Calu3 (cell line): ENCODE measurements at regions of chr20 and their contacts with region 1.

Region 1: GRCh38 chr20:35994994-35995453 is 26.6 kb downstream of the CNBD2 start:
- DNase-seq: peak; percentile 97
- H3K4me3 Mint-ChIP-seq: no peak overlapping the region
- H3K27ac Mint-ChIP-seq: no peak overlapping the region
- H3K4me1 Mint-ChIP-seq: peaks cover 11% of the 10 kb centered on the region
- H3K27me3 Mint-ChIP-seq: peaks cover 2% of the 10 kb centered on the region
- CTCF ChIP-seq: peak; percentile 97

Region 2: DNA sequence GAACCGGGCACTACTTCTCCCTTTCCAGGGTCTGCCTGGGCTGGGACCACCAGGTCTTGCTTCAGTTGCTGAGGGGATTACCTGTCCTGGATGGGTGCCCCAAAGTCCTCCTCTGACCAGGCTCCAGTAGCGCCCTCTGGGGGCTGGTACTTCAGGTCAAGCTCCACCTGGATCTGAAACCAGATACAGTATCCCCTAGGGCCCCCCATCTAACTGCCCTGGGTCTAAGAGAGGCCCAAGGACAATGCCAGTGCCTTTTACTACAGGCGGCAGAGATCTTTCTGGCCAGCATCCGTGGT is 390.6 kb before region 1 on chr20:
- CTCF ChIA-PET with region 1: no interaction called
- intact Hi-C with region 1: no loop called
- DNase-seq: peak; percentile 63
- H3K4me3 Mint-ChIP-seq: no peak overlapping the region
- H3K27ac Mint-ChIP-seq: no peak overlapping the region
- H3K4me1 Mint-ChIP-seq: peaks cover 44% of the 10 kb centered on the region
- H3K27me3 Mint-ChIP-seq: no peaks in the 10 kb centered on the region
- CTCF ChIP-seq: peak; percentile 57

Region 3: GRCh38 chr20:35718972-35719635 is 275.9 kb before region 1 on chr20:
- CTCF ChIA-PET with region 1: no interaction called
- intact Hi-C with region 1: no loop called
- DNase-seq: no peak
- H3K4me3 Mint-ChIP-seq: no peak overlapping the region
- H3K27ac Mint-ChIP-seq: no peak overlapping the region
- H3K4me1 Mint-ChIP-seq: no peaks in the 10 kb centered on the region
- H3K27me3 Mint-ChIP-seq: no peaks in the 10 kb centered on the region
- CTCF ChIP-seq: no peak

Region 4: GRCh38 chr20:35954200-35954906 is 40.7 kb before region 1 on chr20 and contains the start of gene SCAND1:
- CTCF ChIA-PET with region 1: interaction called, 27 read pairs
- intact Hi-C with region 1: no loop called
- DNase-seq: peak; percentile 99
- H3K4me3 Mint-ChIP-seq: peak within 1 kb of the TSS; percentile 99
- H3K27ac Mint-ChIP-seq: peak within 1 kb of the TSS; percentile 88
- H3K4me1 Mint-ChIP-seq: peaks cover 13% of the 10 kb centered on the region
- H3K27me3 Mint-ChIP-seq: no peaks in the 10 kb centered on the region
- CTCF ChIP-seq: peak; percentile 96
- total RNA-seq, gene SCAND1: 83.5 and 88.6 TPM in 2 replicates

Region 5: GRCh38 chr20:36064658-36065426 is 69.8 kb after region 1 on chr20:
- CTCF ChIA-PET with region 1: interaction called, 11 read pairs
- intact Hi-C with region 1: no loop called
- DNase-seq: peak; percentile 100
- H3K4me3 Mint-ChIP-seq: peak overlapping the region; percentile 95
- H3K27ac Mint-ChIP-seq: peak overlapping the region; percentile 91
- H3K4me1 Mint-ChIP-seq: peaks cover 35% of the 10 kb centered on the region
- H3K27me3 Mint-ChIP-seq: no peaks in the 10 kb centered on the region
- CTCF ChIP-seq: no peak

Region 6: DNA sequence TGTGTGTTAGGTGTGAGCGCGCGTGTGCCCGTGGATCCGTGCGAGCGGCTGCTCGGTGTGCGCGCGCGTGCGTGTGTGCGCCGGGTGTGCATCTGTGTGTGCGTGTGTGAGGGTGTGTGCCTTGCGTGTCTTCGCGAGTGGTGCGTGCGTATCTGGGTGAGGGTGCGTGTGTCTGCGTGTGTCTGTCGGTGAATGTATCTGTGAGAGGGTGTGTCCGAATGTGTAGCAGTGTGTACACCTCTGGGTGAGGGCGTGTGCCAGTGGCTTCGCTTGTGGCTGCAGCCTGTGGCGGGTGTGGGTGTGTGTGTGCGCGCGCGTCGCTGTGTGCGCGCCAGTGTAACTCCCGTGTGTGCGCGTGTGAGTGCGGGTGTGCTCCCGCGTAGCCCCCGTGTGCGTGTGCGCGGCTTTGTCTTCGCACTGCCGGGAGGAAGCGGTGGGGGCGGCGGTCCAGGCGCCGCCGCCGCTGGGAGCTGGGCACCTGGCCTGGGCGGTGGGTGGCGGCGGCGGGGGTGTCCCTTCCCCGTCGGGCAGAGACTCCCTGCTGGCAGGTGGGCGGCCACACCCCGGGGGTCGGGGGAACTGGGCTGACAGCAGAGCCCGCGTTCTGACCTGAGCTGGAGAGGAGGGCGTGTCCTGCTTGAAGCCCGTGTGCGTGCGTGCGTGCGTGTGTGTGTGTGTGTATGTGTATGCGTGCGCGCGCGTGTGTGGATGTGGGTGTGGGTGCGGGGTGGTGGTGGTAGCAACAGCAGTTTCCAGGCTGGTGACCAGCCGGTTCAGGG is 98.2 kb after region 1 on chr20:
- CTCF ChIA-PET with region 1: interaction called, 11 read pairs
- intact Hi-C with region 1: no loop called
- DNase-seq: peak; percentile 84
- H3K4me3 Mint-ChIP-seq: peak overlapping the region; percentile 94
- H3K27ac Mint-ChIP-seq: peak overlapping the region; percentile 72
- H3K4me1 Mint-ChIP-seq: peaks cover 63% of the 10 kb centered on the region
- H3K27me3 Mint-ChIP-seq: no peaks in the 10 kb centered on the region
- CTCF ChIP-seq: no peak

Region 7: GRCh38 chr20:36144336-36144735 is 149.3 kb after region 1 on chr20:
- CTCF ChIA-PET with region 1: interaction called, 259 read pairs
- intact Hi-C with region 1: no loop called
- DNase-seq: no peak
- H3K4me3 Mint-ChIP-seq: no peak overlapping the region
- H3K27ac Mint-ChIP-seq: no peak overlapping the region
- H3K4me1 Mint-ChIP-seq: peaks cover 26% of the 10 kb centered on the region
- H3K27me3 Mint-ChIP-seq: no peaks in the 10 kb centered on the region
- CTCF ChIP-seq: no peak

Region 8: GRCh38 chr20:36199345-36200257 is 204.6 kb after region 1 on chr20:
- CTCF ChIA-PET with region 1: interaction called, 26 read pairs
- intact Hi-C with region 1: loop called (anchors 1 kb)
- DNase-seq: peak; percentile 92
- H3K4me3 Mint-ChIP-seq: no peak overlapping the region
- H3K27ac Mint-ChIP-seq: no peak overlapping the region
- H3K4me1 Mint-ChIP-seq: no peaks in the 10 kb centered on the region
- H3K27me3 Mint-ChIP-seq: no peaks in the 10 kb centered on the region
- CTCF ChIP-seq: peak; percentile 98

Region 9: DNA sequence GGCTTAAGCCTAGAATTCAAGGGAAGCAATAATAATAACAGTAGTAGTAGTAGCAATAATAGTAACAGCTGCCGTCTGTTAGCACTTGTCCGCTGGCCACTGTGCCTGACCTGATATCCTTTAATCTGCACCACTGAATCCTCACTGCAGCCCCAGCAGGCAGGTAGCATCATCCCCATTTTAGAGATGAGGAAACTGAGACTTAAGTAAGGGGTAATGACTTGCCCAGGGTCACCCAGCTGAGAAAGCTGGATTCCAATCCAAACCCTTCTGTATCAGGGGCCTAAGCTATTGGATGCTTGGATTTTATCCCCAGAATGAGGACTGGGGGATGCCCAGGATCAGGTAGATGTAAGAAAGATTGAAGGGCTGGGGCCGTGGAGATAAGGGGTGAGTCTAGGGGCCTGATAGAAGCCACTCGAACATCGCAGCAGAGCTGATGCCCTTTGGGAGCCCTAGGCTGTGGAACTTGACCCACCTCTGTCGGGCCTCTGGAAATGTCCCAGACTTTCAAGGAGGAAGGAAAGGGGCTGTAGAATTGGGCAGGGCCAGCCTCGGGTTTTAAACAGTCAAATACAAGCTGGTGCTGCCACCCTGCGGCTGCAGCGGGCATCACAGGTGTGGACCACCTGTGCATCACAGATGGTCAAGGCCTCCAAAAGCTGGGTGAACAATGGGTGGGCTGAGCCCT is 444.2 kb after region 1 on chr20:
- CTCF ChIA-PET with region 1: interaction called, 7 read pairs
- intact Hi-C with region 1: loop called (anchors 10 kb)
- DNase-seq: peak; percentile 89
- H3K4me3 Mint-ChIP-seq: no peak overlapping the region
- H3K27ac Mint-ChIP-seq: no peak overlapping the region
- H3K4me1 Mint-ChIP-seq: no peaks in the 10 kb centered on the region
- H3K27me3 Mint-ChIP-seq: peaks cover 32% of the 10 kb centered on the region
- CTCF ChIP-seq: peak; percentile 99